ENCODE measurements at regions of chr4 and their contacts with region 1.

Region 1: DNA sequence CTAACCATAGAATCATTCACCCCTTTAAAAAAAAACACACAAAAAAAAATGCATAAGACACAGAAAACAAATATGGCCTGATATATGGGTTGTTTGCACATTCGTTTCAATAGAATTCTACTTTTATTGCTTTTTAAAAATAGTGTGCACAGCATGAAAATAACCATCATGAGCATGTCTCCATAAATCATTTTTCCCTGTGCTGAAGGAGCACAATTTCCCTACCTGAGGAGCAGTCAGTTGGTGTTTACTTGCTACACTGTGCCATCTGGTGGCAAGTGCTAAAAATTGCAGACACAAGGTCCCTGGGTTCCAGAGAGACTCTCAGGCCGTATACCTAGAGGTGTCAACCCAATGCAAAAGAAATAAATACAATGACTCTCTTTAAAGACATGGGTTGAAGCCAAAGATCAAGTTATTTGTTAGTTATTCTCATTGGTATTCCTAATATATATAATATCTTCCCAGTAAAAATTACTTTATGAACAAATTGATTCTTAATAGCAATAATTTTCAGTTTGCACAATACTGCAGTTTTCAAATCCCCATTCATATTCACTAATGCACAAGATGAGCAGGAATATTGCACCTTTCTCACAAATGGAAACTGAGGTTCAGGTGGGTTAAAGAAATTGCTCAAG is 551.4 kb downstream of the IQCM start:
- DNase-seq: peak in 1 of 2 experiments; percentile 32
- H3K4me3 ChIP-seq: no peak overlapping the region
- H3K27ac ChIP-seq: no peak overlapping the region
- H3K4me1 ChIP-seq: no peaks in the 10 kb centered on the region
- H3K27me3 ChIP-seq: no peaks in the 10 kb centered on the region
- CTCF ChIP-seq: peak; percentile 76

Region 2: GRCh38 chr4:147924604-147925412 is 1339.4 kb before region 1 on chr4:
- CTCF ChIA-PET with region 1: no interaction called
- POLR2A ChIA-PET with region 1: no interaction called
- intact Hi-C with region 1: loop called (anchors 2 kb)
- DNase-seq: no peak
- H3K4me3 ChIP-seq: no peak overlapping the region
- H3K27ac ChIP-seq: no peak overlapping the region
- H3K4me1 ChIP-seq: no peaks in the 10 kb centered on the region
- H3K27me3 ChIP-seq: no peaks in the 10 kb centered on the region
- CTCF ChIP-seq: peak; percentile 39; the same call in 1 of the 2 replicates

Region 3: DNA sequence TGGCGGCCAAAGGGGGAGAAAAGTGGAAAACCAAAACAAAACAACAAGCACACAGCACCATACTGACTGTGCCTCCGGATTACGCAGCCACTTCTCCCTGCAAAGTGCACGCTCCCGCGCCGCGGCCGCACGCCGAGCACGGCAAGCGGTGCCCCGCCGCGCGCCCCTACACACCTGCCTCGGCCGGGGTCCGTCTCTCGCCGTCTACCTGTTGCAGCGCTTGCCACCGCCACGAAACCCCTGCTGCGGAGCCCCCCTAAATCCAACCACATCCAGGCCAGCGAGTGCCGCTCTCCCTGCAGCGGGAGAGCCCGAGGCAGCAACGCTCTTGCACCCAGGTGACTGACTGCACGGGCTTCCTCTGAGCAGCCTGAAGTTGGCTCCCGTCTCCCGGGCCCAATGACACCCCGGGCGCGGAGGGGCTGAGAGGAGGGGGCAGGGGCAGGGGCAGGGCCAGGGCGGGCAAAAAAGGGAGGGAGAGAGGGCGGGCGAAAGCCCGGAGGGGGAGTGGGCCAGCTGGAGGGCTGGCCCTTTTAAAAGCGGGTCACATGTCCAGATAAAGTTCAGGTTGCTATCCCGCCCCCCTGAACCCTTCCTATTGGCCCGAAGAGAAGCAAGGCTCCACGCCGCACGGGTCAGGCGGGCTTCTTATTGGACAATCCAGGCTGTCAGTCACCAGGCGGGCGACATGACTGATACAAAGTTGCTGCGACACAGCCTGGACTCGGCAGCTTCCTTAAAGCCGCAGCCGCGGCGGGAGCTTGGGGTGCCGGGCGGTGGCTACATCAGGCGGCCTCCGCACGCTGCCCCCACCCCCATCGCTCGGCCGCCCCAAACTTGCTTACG is 822.0 kb before region 1 on chr4 and contains the start of gene NR3C2:
- CTCF ChIA-PET with region 1: no interaction called
- POLR2A ChIA-PET with region 1: no interaction called
- intact Hi-C with region 1: loop called (anchors 5 kb)
- DNase-seq: peak; percentile 92 to 96
- H3K4me3 ChIP-seq: peak within 1 kb of the TSS; percentile 74
- H3K27ac ChIP-seq: no peak within 1 kb of the TSS
- H3K4me1 ChIP-seq: peaks cover 13% of the 10 kb centered on the region; the same call in 1 of the 2 replicates
- H3K27me3 ChIP-seq: peaks cover 20% of the 10 kb centered on the region
- CTCF ChIP-seq: no peak
- total RNA-seq, gene NR3C2: 0.93 and 0.96 TPM in 2 replicates

Region 4: GRCh38 chr4:148787831-148788477 is 476.3 kb before region 1 on chr4:
- CTCF ChIA-PET with region 1: no interaction called
- POLR2A ChIA-PET with region 1: no interaction called
- intact Hi-C with region 1: loop called (anchors 10 kb)
- DNase-seq: peak; percentile 34 to 44
- H3K4me3 ChIP-seq: no peak overlapping the region
- H3K27ac ChIP-seq: peak overlapping the region; percentile 25
- H3K4me1 ChIP-seq: peaks cover 27% of the 10 kb centered on the region
- H3K27me3 ChIP-seq: no peaks in the 10 kb centered on the region
- CTCF ChIP-seq: no peak

Region 5: GRCh38 chr4:149031399-149031798 is 232.8 kb before region 1 on chr4:
- CTCF ChIA-PET with region 1: interaction called, 4 read pairs
- POLR2A ChIA-PET with region 1: no interaction called
- intact Hi-C with region 1: loop called (anchors 2 kb)
- DNase-seq: peak in 1 of 2 experiments; percentile 40
- H3K4me3 ChIP-seq: no peak overlapping the region
- H3K27ac ChIP-seq: no peak overlapping the region
- H3K4me1 ChIP-seq: no peaks in the 10 kb centered on the region
- H3K27me3 ChIP-seq: no peaks in the 10 kb centered on the region
- CTCF ChIP-seq: peak; percentile 62

Region 6: DNA sequence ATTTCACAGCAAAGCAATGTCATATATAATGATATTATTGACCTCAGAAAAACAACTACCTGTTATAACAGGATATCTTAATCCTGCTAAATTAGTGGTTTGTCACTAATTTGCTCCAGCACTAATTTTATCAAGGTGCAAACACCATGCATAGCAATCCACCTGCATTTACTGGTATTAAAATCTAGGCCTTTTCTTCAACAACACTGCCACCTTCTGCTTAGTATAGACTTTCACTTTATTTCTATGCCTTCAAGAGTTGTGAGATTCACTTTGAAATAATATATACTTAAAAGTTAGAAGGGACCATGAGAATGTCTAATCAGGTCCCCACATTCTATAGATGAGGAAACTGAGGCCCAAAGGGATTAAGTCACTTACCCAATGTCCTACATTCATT is 633.6 kb after region 1 on chr4:
- CTCF ChIA-PET with region 1: no interaction called
- POLR2A ChIA-PET with region 1: no interaction called
- intact Hi-C with region 1: loop called (anchors 2 kb)
- DNase-seq: no peak
- H3K4me3 ChIP-seq: no peak overlapping the region
- H3K27ac ChIP-seq: no peak overlapping the region
- H3K4me1 ChIP-seq: no peaks in the 10 kb centered on the region
- H3K27me3 ChIP-seq: no peaks in the 10 kb centered on the region
- CTCF ChIP-seq: peak; percentile 54

Measured in PC-9 (cell line).